ENCODE measurements at regions of chr19 and their contacts with region 1.

Region 1: GRCh38 chr19:15555759-15556633 is 47.7 kb downstream of the CYP4F22 start:
- DNase-seq: peak; percentile 89 to 98 (median 94)
- ATAC-seq: peak; percentile 93
- H3K4me3 ChIP-seq: peak overlapping the region; percentile 62
- H3K4me3 Mint-ChIP-seq: peak overlapping the region; percentile 79 to 96 (median 86)
- H3K27ac ChIP-seq: peak overlapping the region; percentile 67
- H3K27ac Mint-ChIP-seq: peak overlapping the region; percentile 65 to 94 (median 91)
- H3K4me1 ChIP-seq: peaks cover 5 to 8% of the 10 kb centered on the region in 2 donors
- H3K4me1 Mint-ChIP-seq: peaks cover 21 to 37% (median 27%) of the 10 kb centered on the region in 7 donors
- H3K27me3 ChIP-seq: no peaks in the 10 kb centered on the region
- H3K27me3 Mint-ChIP-seq: peaks cover 0 to 8% (median 0%) of the 10 kb centered on the region in 5 donors

Region 2: DNA sequence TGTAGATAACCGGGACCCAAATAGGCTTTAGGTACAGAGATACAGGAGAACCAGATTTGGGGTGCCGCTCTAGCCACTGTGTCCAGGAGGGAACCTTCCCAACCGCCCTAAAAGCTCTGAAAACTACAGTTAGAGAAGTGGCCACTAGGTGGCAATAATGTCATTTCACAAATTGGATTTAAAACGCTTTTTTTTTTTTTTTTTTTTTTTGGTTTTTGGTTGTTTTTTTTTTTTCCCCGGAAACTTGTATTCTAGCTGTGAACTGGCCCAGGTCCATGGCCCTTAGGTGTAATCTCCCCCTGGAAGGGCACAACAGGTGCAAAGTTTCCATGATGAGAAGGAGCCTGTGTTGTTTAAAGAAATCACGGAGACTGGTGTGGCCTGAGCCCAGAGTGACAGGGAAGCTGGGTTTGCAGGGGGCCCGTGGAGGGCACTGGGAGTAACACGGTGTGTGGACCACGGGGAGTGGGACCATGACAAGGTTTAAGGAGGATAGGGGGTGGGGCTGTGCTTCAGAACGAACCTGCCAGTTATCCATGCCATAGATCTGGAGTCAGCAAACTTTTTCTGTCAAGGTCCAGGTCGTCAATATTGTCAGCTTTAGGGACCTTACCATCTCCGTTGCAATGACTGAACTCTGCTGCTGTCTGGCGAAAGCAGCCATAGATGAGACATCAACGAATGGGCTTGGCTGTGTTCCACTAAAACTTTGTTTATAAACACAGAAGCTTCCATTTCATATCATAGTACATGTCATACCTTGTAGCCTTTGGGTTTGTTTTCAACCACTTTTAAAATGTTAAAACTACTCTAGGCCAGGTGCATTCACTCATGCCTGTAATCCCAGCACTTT is 463.9 kb before region 1 on chr19:
- CTCF ChIA-PET with region 1: interaction called, 6 read pairs
- POLR2A ChIA-PET with region 1: interaction called, 5 read pairs
- intact Hi-C with region 1: loop called (anchors 1 to 2 kb)
- DNase-seq: peak in 7 of 9 donors; percentile 45 to 72 (median 67)
- ATAC-seq: peak; percentile 84
- H3K4me3 ChIP-seq: no peak overlapping the region
- H3K4me3 Mint-ChIP-seq: no peak overlapping the region
- H3K27ac ChIP-seq: no peak overlapping the region
- H3K27ac Mint-ChIP-seq: peak overlapping the region in 3 of 9 donors; percentile 32 to 72 (median 53)
- H3K4me1 ChIP-seq: peaks cover 4 to 6% of the 10 kb centered on the region in 2 donors
- H3K4me1 Mint-ChIP-seq: peaks cover 0 to 9% (median 4%) of the 10 kb centered on the region in 7 donors
- H3K27me3 ChIP-seq: no peaks in the 10 kb centered on the region
- H3K27me3 Mint-ChIP-seq: peaks cover 0 to 18% (median 9%) of the 10 kb centered on the region in 5 donors

Region 3: GRCh38 chr19:15125232-15126067 is 430.5 kb before region 1 on chr19:
- CTCF ChIA-PET with region 1: no interaction called
- POLR2A ChIA-PET with region 1: no interaction called
- intact Hi-C with region 1: loop called in 1 of 2 experiments (anchors 1 kb)
- DNase-seq: peak; percentile 94 to 98 (median 96)
- ATAC-seq: peak; percentile 93
- H3K4me3 ChIP-seq: peak overlapping the region; percentile 90
- H3K4me3 Mint-ChIP-seq: peak overlapping the region; percentile 89 to 100 (median 98)
- H3K27ac ChIP-seq: peak overlapping the region; percentile 92
- H3K27ac Mint-ChIP-seq: peak overlapping the region; percentile 91 to 100 (median 97)
- H3K4me1 ChIP-seq: peaks cover 0 to 25% of the 10 kb centered on the region in 2 donors
- H3K4me1 Mint-ChIP-seq: peaks cover 27 to 59% (median 44%) of the 10 kb centered on the region in 7 donors
- H3K27me3 ChIP-seq: no peaks in the 10 kb centered on the region
- H3K27me3 Mint-ChIP-seq: peaks cover 0 to 2% (median 0%) of the 10 kb centered on the region in 5 donors

Region 4: DNA sequence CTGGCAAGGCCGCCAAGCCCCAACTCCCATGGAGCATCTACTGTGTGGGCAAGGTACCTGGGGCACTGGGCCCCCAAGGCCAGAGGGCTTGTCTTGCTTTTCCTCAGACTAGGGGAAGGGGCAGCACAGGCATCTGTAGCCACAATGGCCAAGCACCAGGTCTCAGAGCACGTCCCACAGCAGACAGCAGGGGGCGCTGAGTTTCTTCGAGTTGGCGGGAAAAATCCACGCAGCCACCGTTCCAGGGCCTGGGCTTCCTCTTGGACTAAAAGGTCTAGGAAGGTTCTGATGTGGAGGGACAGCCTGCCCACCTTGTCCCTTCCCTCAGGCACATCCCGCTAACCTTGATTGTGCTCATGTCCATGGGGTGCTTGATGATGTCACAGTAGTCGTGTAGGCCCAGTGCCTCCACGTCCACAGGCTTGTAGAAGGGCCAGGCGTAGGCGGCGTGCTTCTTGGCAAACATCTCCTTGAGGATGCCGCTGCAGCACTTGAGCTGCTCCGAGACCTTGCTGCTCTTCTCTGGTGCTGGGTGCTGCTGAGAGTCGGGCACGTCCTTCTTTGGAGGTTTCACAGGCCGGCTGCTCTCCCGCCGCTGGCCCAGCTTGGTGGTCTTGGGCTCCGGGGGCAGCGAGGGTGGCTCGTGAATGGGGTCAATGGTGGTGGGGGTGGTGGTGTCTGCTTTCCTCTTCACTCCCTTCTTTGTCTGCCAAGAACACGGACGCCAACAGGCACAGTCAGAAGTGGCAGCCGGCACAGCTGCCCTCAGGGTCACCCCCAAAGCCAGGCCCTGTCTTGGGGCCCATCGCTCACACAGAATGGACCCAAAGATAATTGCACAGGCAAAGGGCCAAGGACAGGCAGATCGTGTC is 291.7 kb before region 1 on chr19:
- CTCF ChIA-PET with region 1: interaction called, 5 read pairs
- POLR2A ChIA-PET with region 1: interaction called, 5 read pairs
- intact Hi-C with region 1: loop called in 1 of 2 experiments (anchors 1 kb)
- DNase-seq: peak; percentile 54 to 77 (median 65)
- ATAC-seq: peak; percentile 79
- H3K4me3 ChIP-seq: no peak overlapping the region
- H3K4me3 Mint-ChIP-seq: no peak overlapping the region
- H3K27ac ChIP-seq: no peak overlapping the region
- H3K27ac Mint-ChIP-seq: peak overlapping the region in 2 of 9 donors; percentile 14 to 38
- H3K4me1 ChIP-seq: no peaks in the 10 kb centered on the region
- H3K4me1 Mint-ChIP-seq: peaks cover 7 to 19% (median 11%) of the 10 kb centered on the region in 7 donors
- H3K27me3 ChIP-seq: no peaks in the 10 kb centered on the region
- H3K27me3 Mint-ChIP-seq: no peaks in the 10 kb centered on the region

Region 5: DNA sequence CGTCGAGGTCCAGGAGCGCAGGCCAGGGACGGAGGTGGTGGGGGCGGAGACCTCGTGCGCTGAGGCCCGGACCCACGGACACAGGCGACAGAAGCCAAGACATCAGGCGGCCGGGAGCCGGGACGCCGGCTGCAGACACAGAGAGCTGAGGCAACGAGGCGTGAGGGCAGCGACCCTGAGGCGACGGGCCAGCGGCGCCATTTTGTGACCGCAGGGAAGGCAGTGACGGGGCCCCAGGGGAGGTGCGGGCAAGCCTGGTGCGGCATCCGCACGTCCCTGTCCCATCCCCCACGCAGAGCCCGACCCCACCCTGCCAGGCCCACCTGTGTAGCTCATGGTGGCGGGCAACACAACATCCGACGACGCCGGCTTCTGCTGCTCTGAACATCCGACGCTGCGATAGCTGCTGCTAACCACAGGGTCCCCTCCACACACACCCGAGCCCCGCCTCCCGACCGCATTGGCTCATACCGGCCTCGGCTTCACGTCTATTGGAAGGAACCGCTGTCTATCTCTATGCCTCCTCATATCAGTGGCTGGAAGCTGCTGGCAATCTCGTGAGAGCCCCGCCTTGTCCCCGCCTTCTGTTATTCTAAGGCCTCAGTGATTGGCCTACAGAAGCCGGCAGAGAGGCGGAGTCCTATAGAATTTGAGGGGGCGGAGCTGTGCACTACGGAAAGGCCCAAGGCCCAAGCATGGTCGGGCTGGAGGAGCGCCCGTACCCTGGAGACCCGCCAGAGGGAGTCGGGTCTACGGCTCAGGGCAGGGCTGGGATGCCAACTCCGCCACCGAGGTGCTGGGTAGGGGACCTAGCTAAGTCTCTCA is 137.2 kb before region 1 on chr19 and contains the start of gene AKAP8L:
- CTCF ChIA-PET with region 1: interaction called, 182 read pairs
- POLR2A ChIA-PET with region 1: interaction called, 128 read pairs
- intact Hi-C with region 1: loop called (anchors 1 kb)
- DNase-seq: peak; percentile 90 to 100 (median 99)
- ATAC-seq: peak; percentile 95
- H3K4me3 ChIP-seq: peak within 1 kb of the TSS; percentile 71
- H3K4me3 Mint-ChIP-seq: peak within 1 kb of the TSS; percentile 92 to 100 (median 99)
- H3K27ac ChIP-seq: peak within 1 kb of the TSS; percentile 88
- H3K27ac Mint-ChIP-seq: peak within 1 kb of the TSS; percentile 94 to 99 (median 97)
- H3K4me1 ChIP-seq: peaks cover 23 to 25% of the 10 kb centered on the region in 2 donors
- H3K4me1 Mint-ChIP-seq: peaks cover 31 to 53% (median 42%) of the 10 kb centered on the region in 7 donors
- H3K27me3 ChIP-seq: no peaks in the 10 kb centered on the region
- H3K27me3 Mint-ChIP-seq: no peaks in the 10 kb centered on the region
- total RNA-seq, gene AKAP8L: 81.2 to 208 (median 146) TPM

Region 6: DNA sequence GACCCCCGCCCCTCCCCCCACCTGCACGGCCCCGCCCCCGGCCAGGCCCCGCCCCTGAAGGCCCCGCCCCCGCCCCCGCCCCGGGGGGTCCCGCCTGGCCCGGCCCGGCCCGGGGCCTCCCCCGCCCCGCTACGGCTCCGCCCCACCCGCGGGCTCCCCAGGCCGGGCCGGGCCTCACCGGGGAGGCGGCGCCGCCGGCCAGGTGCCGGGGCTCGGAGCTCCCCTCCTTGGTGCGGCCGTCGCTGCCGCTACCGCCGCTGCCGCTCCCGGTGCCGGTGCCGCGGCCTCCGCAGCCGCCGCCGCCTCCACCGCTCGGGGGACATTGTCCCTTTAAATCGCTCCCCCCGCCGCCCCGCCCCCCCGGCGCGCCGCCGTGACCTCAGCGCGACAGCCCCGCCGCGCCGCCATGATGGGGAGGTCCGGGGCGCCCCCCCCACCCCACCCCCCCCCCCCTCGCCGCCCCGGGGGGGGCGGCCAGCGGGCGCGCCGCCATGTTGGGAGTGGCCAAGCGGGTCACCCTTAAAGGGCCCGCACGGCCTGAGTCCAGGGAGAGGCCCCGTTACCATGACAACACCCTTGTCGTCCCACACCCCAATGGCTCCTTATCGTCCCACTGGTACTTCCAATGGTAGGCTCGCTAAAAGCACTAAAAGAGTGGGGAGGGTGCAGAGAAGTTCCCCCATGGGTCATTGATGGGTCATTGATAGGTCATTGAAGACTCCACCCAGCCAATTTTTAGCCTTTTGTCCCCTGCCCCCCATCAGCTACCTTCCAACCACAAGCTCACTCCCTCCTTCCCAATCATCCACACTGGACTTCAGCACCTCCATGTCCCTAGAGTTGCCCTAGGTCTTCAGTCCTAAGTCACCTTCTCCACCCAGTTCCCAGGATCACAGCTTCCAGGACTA is 106.1 kb before region 1 on chr19 and contains the start of gene WIZ:
- CTCF ChIA-PET with region 1: interaction called, 6 read pairs
- POLR2A ChIA-PET with region 1: interaction called, 5 read pairs
- intact Hi-C with region 1: loop called in 1 of 2 experiments (anchors 1 kb)
- DNase-seq: peak; percentile 74 to 92 (median 86)
- ATAC-seq: peak; percentile 93
- H3K4me3 ChIP-seq: peak within 1 kb of the TSS; percentile 35
- H3K4me3 Mint-ChIP-seq: peak within 1 kb of the TSS; percentile 62 to 86 (median 82)
- H3K27ac ChIP-seq: peak within 1 kb of the TSS; percentile 72
- H3K27ac Mint-ChIP-seq: peak within 1 kb of the TSS; percentile 80 to 96 (median 91)
- H3K4me1 ChIP-seq: peaks cover 0 to 5% of the 10 kb centered on the region in 2 donors
- H3K4me1 Mint-ChIP-seq: peaks cover 5 to 32% (median 30%) of the 10 kb centered on the region in 7 donors
- H3K27me3 ChIP-seq: no peaks in the 10 kb centered on the region
- H3K27me3 Mint-ChIP-seq: no peaks in the 10 kb centered on the region
- total RNA-seq, gene WIZ: 20.1 to 34.9 (median 24.8) TPM

Region 7: GRCh38 chr19:15508035-15508710 is 47.8 kb before region 1 on chr19 and contains the start of gene CYP4F22:
- CTCF ChIA-PET with region 1: no interaction called
- POLR2A ChIA-PET with region 1: interaction called, 8 read pairs
- intact Hi-C with region 1: loop called in 1 of 2 experiments (anchors 5 kb)
- DNase-seq: peak in 1 of 9 donors; percentile 30
- ATAC-seq: peak; percentile 18
- H3K4me3 ChIP-seq: peak within 1 kb of the TSS; percentile 44
- H3K4me3 Mint-ChIP-seq: peak within 1 kb of the TSS; percentile 75 to 84 (median 80)
- H3K27ac ChIP-seq: no peak within 1 kb of the TSS
- H3K27ac Mint-ChIP-seq: peak within 1 kb of the TSS in 1 of 9 donors; percentile 69
- H3K4me1 ChIP-seq: peaks cover 0 to 7% of the 10 kb centered on the region in 2 donors
- H3K4me1 Mint-ChIP-seq: peaks cover 9 to 22% (median 16%) of the 10 kb centered on the region in 7 donors
- H3K27me3 ChIP-seq: no peaks in the 10 kb centered on the region
- H3K27me3 Mint-ChIP-seq: peaks cover 0 to 48% (median 11%) of the 10 kb centered on the region in 5 donors
- total RNA-seq, gene CYP4F22: 0.24 to 3.6 (median 0.28) TPM in 4 of 5 experiments, not detected in the other

Region 8: DNA sequence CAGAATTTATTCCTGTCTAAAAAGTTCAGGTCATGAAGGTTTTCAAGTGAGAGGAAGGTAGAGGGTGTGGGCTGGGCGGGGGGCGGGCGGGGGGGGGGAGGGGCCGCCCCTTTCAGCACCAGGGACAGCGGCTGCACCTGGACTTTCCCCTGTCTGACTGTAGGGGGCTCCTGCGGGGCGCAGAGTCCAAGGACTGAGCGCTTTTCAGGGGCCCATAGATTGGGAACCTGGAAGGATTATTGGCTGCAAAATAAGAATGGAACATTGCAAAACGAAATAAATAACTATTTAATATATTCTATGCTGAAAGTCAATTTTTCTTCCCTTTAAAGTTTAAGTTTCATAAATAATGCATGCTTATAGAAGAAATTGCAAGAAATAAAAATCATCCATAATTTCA is 75.8 kb after region 1 on chr19:
- CTCF ChIA-PET with region 1: no interaction called
- POLR2A ChIA-PET with region 1: no interaction called
- intact Hi-C with region 1: no loop called
- DNase-seq: peak in 5 of 9 donors; percentile 3 to 39 (median 20)
- ATAC-seq: peak; percentile 47
- H3K4me3 ChIP-seq: no peak overlapping the region
- H3K4me3 Mint-ChIP-seq: no peak overlapping the region
- H3K27ac ChIP-seq: no peak overlapping the region
- H3K27ac Mint-ChIP-seq: no peak overlapping the region
- H3K4me1 ChIP-seq: peaks cover 0 to 6% of the 10 kb centered on the region in 2 donors
- H3K4me1 Mint-ChIP-seq: no peaks in the 10 kb centered on the region
- H3K27me3 ChIP-seq: no peaks in the 10 kb centered on the region
- H3K27me3 Mint-ChIP-seq: peaks cover 9 to 45% (median 34%) of the 10 kb centered on the region in 5 donors